ENCODE measurements at regions of chr5 and their contacts with region 1.

Region 1: GRCh38 chr5:125011014-125011413 is 264.6 kb upstream of the ZNF608 start:
- DNase-seq: no peak
- ATAC-seq: peak in 1 of 8 donors; percentile 13
- H3K4me3 ChIP-seq: no peak overlapping the region
- H3K27ac ChIP-seq: no peak overlapping the region
- H3K4me1 ChIP-seq: peaks cover 0 to 11% (median 0%) of the 10 kb centered on the region in 9 donors
- H3K27me3 ChIP-seq: no peaks in the 10 kb centered on the region
- CTCF ChIP-seq: no peak

Region 2: GRCh38 chr5:124849774-124850173 is 161.2 kb before region 1 on chr5:
- intact Hi-C with region 1: no loop called
- DNase-seq: no peak
- ATAC-seq: no peak
- H3K4me3 ChIP-seq: no peak overlapping the region
- H3K27ac ChIP-seq: no peak overlapping the region
- H3K4me1 ChIP-seq: no peaks in the 10 kb centered on the region
- H3K27me3 ChIP-seq: no peaks in the 10 kb centered on the region
- CTCF ChIP-seq: no peak

Region 3: DNA sequence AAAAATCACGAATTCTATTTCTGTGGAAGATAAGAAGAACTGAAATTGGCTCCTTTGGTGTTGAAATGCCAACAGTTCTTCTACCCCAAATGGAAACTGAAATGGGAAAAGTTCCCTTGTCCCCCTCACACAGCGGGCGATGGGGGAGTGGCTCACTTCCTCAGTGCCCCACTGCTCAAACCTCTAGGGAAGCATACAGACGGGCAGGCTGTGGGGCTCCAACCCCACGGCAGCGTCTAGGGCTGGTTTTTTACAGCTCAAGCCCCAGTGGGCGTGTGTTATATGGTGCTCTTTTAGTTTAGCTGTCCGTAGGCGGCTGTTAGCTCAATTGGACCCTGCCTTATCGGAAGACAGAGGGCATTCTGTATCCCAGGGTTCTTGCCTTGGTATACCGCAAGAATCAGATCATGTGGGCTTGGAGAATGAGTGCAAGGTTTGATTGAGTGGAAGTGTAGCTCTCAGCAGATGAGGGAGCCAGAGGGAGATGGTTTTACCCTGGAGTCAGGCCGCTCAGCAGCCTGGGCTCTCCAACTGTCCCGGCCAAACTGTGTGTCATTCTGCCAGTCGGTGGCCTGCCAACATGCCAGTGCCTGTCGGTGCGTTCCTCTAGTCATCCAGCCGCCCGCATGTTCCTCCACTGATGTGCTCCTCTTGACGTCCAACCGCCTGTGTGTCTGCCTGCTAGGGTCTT is 98.2 kb before region 1 on chr5:
- intact Hi-C with region 1: loop called in 1 of 10 experiments (anchors 10 kb)
- DNase-seq: peak; percentile 9 to 38
- ATAC-seq: peak; percentile 52 to 94 (median 78)
- H3K4me3 ChIP-seq: no peak overlapping the region
- H3K27ac ChIP-seq: no peak overlapping the region
- H3K4me1 ChIP-seq: peaks cover 3 to 23% (median 21%) of the 10 kb centered on the region in 9 donors
- H3K27me3 ChIP-seq: no peaks in the 10 kb centered on the region
- CTCF ChIP-seq: peak in 2 of 9 donors; percentile 10 to 18